ENCODE measurements at regions of chr7 and their contacts with region 1.

Region 1: DNA sequence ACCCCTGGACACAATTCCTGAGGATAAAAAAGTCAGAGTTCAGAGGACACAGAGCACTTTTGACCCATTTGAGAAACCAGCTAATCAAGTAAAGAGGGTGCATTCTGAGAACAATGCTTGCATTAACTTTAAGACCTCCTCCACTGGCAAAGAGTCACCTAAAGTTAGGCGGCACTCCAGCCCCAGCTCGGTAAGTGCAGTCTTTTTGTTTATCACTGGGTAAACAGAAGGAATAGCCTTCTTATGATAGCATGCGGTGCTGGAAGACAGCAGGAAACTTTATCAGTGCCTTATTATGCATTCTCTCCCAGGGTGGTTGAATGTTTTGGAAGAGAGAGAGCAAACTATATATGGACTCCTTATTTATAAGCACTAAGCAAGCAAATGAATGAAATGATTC is 130.5 kb downstream of the CDK14 start:
- DNase-seq: no peak
- ATAC-seq: no peak
- H3K4me3 Mint-ChIP-seq: peak overlapping the region; percentile 74
- H3K27ac Mint-ChIP-seq: peak overlapping the region; percentile 90
- H3K4me1 Mint-ChIP-seq: peaks cover 94% of the 10 kb centered on the region
- H3K27me3 Mint-ChIP-seq: no peaks in the 10 kb centered on the region
- CTCF ChIP-seq: no peak

Region 2: GRCh38 chr7:90552521-90552920 is 174.1 kb before region 1 on chr7:
- CTCF ChIA-PET with region 1: no interaction called
- POLR2A ChIA-PET with region 1: no interaction called
- intact Hi-C with region 1: no loop called
- DNase-seq: no peak
- ATAC-seq: peak; percentile 34
- H3K4me3 Mint-ChIP-seq: no peak overlapping the region
- H3K27ac Mint-ChIP-seq: no peak overlapping the region
- H3K4me1 Mint-ChIP-seq: peaks cover 3% of the 10 kb centered on the region
- H3K27me3 Mint-ChIP-seq: peaks cover 3% of the 10 kb centered on the region
- CTCF ChIP-seq: no peak

Region 3: DNA sequence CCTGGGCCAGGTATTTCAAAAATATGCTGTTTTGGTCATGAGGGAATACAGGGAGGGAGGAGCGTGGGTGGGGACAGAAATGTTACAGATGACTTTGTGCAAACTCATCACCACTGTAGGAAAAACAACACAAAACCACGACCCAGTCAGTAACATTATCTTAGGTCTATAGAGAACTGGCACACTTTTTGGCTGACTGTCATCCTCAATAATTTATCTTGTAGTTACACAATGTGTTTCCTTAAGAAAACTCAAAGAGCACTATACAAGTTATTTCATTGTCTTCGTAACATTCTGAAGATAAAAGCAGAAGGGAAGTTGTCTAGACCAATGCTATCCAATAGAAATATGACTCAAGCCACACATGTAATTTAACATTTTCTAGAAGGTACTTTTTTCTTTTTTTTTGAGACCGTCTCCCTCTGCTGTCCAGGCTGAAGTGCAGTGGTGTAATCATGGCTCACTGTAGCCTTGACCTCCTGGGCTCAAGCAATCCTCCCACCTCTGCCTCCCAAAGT is 147.4 kb before region 1 on chr7:
- CTCF ChIA-PET with region 1: no interaction called
- POLR2A ChIA-PET with region 1: no interaction called
- intact Hi-C with region 1: no loop called
- DNase-seq: no peak
- ATAC-seq: no peak
- H3K4me3 Mint-ChIP-seq: no peak overlapping the region
- H3K27ac Mint-ChIP-seq: no peak overlapping the region
- H3K4me1 Mint-ChIP-seq: peaks cover 6% of the 10 kb centered on the region
- H3K27me3 Mint-ChIP-seq: no peaks in the 10 kb centered on the region
- CTCF ChIP-seq: no peak

Region 4: GRCh38 chr7:90655566-90655965 is 71.1 kb before region 1 on chr7:
- CTCF ChIA-PET with region 1: no interaction called
- POLR2A ChIA-PET with region 1: no interaction called
- intact Hi-C with region 1: no loop called
- DNase-seq: no peak
- ATAC-seq: peak; percentile 56
- H3K4me3 Mint-ChIP-seq: peak overlapping the region; percentile 16
- H3K27ac Mint-ChIP-seq: peak overlapping the region; percentile 82
- H3K4me1 Mint-ChIP-seq: peaks cover 54% of the 10 kb centered on the region
- H3K27me3 Mint-ChIP-seq: no peaks in the 10 kb centered on the region
- CTCF ChIP-seq: no peak

Region 5: DNA sequence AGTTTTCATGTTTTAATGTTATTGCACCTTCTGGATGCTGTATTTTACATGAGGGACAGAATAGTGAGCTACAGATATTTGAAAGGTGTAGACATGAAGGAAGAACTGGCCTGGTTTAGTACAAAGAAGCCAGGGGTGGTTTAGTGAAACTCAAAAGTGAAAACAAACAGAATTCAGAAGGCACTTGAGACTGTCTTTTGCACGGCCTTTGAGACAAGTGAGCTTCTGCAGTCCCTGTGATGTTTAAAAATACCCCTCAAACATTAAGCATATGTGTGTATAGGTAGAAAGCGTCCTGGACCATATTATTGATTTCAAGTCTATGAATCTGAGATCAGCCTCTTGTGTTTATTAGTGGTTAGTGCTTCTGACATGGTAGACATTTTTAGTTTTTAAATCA is 11.6 kb before region 1 on chr7:
- CTCF ChIA-PET with region 1: interaction called, 4 read pairs
- POLR2A ChIA-PET with region 1: interaction called, 22 read pairs
- intact Hi-C with region 1: loop called (anchors 1 kb)
- DNase-seq: no peak
- ATAC-seq: no peak
- H3K4me3 Mint-ChIP-seq: peak overlapping the region; percentile 75
- H3K27ac Mint-ChIP-seq: peak overlapping the region; percentile 69
- H3K4me1 Mint-ChIP-seq: peaks cover 93% of the 10 kb centered on the region
- H3K27me3 Mint-ChIP-seq: no peaks in the 10 kb centered on the region
- CTCF ChIP-seq: no peak